ENCODE measurements at regions of chr17 and their contacts with region 1.

Region 1: DNA sequence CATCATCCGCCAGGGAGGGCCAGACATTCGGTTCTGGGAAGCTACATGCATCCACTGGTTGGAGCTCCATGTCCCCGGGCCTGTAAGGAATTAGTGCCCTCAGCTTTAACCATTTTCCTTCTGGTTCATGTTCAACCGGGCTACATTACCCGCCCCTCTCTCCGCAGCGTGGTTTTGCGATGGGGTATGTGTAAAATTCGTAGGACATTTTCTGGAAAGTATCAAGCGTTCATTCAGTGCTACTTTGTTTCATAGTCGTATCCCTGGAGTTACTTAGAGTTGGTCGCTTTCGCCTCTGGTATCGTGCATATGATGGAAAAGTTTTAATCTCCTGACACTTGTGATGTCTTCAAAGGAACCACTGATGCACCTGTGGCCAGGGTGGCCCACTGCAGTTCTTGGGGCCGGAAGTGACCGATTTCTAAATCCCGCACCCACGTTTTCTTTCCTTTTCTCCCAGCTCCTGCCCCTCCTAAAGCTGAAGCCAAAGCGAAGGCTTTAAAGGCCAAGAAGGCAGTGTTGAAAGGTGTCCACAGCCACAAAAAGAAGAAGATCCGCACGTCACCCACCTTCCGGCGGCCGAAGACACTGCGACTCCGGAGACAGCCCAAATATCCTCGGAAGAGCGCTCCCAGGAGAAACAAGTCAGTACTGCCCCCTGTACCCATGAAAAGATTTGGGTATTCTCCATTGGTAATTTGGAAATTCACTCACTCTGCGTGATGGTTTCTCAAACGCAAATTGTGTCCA is 637 bp downstream of the RPL23A start:
- DNase-seq: peak; percentile 61
- ATAC-seq: peak; percentile 3
- H3K4me3 Mint-ChIP-seq: peak overlapping the region; percentile 97
- H3K27ac Mint-ChIP-seq: peak overlapping the region; percentile 97
- H3K4me1 Mint-ChIP-seq: peaks cover 61% of the 10 kb centered on the region
- H3K27me3 Mint-ChIP-seq: peaks cover 15% of the 10 kb centered on the region

Region 2: DNA sequence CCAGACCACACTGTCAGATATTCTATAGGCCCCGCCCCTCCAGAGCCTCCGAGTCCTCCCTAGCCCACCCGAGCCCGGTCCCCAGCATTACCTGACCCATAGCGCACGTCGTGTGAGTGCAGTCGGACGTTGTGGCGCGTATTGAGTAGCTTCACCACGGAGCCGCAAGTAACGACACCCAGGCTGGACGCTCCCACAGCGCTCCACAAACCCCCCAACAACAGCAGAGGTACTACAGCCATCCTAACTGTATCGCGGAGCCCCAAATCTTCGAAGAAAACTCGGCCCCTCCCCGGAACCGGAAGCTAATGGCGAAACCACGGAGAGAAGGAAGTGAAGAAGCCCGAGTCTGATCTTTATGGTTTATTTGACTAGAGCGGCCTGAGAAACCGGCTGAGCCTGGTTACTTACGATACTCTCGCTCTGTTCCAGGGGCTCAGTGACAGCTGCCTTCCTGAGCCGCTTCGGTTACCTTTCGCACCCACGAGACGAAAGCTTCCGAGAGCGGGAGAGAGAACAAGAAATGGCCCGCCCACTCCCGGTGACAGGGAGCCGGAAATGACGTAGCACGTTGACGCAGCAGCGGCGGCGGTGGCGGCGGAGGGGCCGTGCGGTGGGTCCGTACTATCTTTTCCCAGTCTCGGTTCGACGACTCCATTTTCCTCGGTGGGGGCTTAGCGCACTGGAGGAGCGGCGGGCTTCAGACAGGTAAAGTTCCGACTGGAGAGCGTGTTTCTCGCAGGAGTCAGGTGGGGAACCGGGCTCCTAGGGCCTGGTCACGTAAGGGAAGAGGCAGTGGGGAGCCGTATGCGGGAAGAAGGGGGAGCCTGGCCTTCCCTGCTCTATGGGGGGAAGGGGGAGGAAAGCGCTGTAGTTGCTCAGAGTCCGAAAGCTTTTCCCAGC is 58.5 kb before region 1 on chr17 and contains the starts of genes SDF2 and SUPT6H:
- CTCF ChIA-PET with region 1: no interaction called
- POLR2A ChIA-PET with region 1: interaction called, 11 read pairs
- DNase-seq: peak; percentile 96
- ATAC-seq: peak; percentile 90
- H3K4me3 Mint-ChIP-seq: peak within 1 kb of the TSS; percentile 99
- H3K27ac Mint-ChIP-seq: peak within 1 kb of the TSS; percentile 100
- H3K4me1 Mint-ChIP-seq: peaks cover 36% of the 10 kb centered on the region
- H3K27me3 Mint-ChIP-seq: no peaks in the 10 kb centered on the region
- total RNA-seq, gene SDF2: 51.7 to 54.5 TPM
- total RNA-seq, gene SUPT6H: 69.4 to 72.8 TPM

Region 3: GRCh38 chr17:28698253-28698941 is 22.0 kb before region 1 on chr17:
- CTCF ChIA-PET with region 1: no interaction called
- POLR2A ChIA-PET with region 1: no interaction called
- DNase-seq: no peak
- ATAC-seq: no peak
- H3K4me3 Mint-ChIP-seq: no peak overlapping the region
- H3K27ac Mint-ChIP-seq: no peak overlapping the region
- H3K4me1 Mint-ChIP-seq: no peaks in the 10 kb centered on the region
- H3K27me3 Mint-ChIP-seq: no peaks in the 10 kb centered on the region

Region 4: GRCh38 chr17:28743225-28744103 is 23.0 kb after region 1 on chr17 and contains the start of gene TRAF4:
- CTCF ChIA-PET with region 1: interaction called, 736 read pairs
- POLR2A ChIA-PET with region 1: interaction called, 212 read pairs
- DNase-seq: peak; percentile 81
- ATAC-seq: peak; percentile 86
- H3K4me3 Mint-ChIP-seq: peak within 1 kb of the TSS; percentile 90
- H3K27ac Mint-ChIP-seq: peak within 1 kb of the TSS; percentile 95
- H3K4me1 Mint-ChIP-seq: peaks cover 53% of the 10 kb centered on the region
- H3K27me3 Mint-ChIP-seq: no peaks in the 10 kb centered on the region
- total RNA-seq, gene TRAF4: 66.0 to 78.4 TPM

Region 5: GRCh38 chr17:28750178-28751047 is 30.0 kb after region 1 on chr17:
- CTCF ChIA-PET with region 1: interaction called, 736 read pairs
- POLR2A ChIA-PET with region 1: interaction called, 212 read pairs
- DNase-seq: peak; percentile 95
- ATAC-seq: peak; percentile 83
- H3K4me3 Mint-ChIP-seq: no peak overlapping the region
- H3K27ac Mint-ChIP-seq: peak overlapping the region; percentile 16
- H3K4me1 Mint-ChIP-seq: peaks cover 34% of the 10 kb centered on the region
- H3K27me3 Mint-ChIP-seq: no peaks in the 10 kb centered on the region

Region 6: GRCh38 chr17:28792877-28793661 is 72.6 kb after region 1 on chr17:
- CTCF ChIA-PET with region 1: no interaction called
- POLR2A ChIA-PET with region 1: no interaction called
- DNase-seq: no peak
- ATAC-seq: no peak
- H3K4me3 Mint-ChIP-seq: no peak overlapping the region
- H3K27ac Mint-ChIP-seq: no peak overlapping the region
- H3K4me1 Mint-ChIP-seq: peaks cover 3% of the 10 kb centered on the region
- H3K27me3 Mint-ChIP-seq: no peaks in the 10 kb centered on the region

Measured in activated CD8-positive, alpha-beta T cell treated with anti-CD3 and anti-CD28 coated beads, Interleukin-2, amount 10 ng/mL, durations not matched to agents 7 days and 5 days (primary cell).